Breast epithelium (tissue), 4 donors: ENCODE measurements at regions of chr11 and their contacts with region 1.

Region 1: GRCh38 chr11:73510877-73511276 is 87.0 kb downstream of the FAM168A start:
- DNase-seq: no peak
- H3K4me3 ChIP-seq: no peak overlapping the region
- H3K27ac ChIP-seq: no peak overlapping the region
- H3K4me1 ChIP-seq: no peaks in the 10 kb centered on the region
- H3K27me3 ChIP-seq: no peaks in the 10 kb centered on the region
- CTCF ChIP-seq: no peak
- POLR2A ChIP-seq: no peak

Region 2: DNA sequence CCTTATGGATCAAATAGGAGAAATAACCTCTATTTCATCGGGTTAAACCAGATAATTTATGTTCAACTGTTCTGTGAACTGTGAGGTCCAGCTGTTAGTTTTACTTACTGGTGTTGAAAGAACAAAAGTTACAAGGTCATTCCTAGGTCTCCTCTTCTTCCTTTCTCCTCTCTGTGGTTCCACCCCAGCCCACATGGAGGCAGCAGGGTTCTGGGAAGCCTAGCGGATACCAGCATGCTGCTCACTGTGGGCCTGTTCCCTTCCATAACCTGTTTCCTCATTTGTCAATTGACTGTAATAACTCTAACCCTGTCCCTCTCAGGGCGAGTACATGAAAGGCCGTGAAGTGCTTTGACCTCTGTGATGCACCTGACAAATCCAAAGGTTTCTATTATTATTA is 106.8 kb before region 1 on chr11:
- intact Hi-C with region 1: loop called (anchors 10 kb)
- DNase-seq: peak in 1 of 2 donors; percentile 48
- H3K4me3 ChIP-seq: no peak overlapping the region
- H3K27ac ChIP-seq: no peak overlapping the region
- H3K4me1 ChIP-seq: no peaks in the 10 kb centered on the region
- H3K27me3 ChIP-seq: no peaks in the 10 kb centered on the region
- CTCF ChIP-seq: peak; percentile 7 to 75 (median 64)
- POLR2A ChIP-seq: no peak